HCT116 (cell line): ENCODE measurements at regions of chr21 and their contacts with region 1.

Region 1: DNA sequence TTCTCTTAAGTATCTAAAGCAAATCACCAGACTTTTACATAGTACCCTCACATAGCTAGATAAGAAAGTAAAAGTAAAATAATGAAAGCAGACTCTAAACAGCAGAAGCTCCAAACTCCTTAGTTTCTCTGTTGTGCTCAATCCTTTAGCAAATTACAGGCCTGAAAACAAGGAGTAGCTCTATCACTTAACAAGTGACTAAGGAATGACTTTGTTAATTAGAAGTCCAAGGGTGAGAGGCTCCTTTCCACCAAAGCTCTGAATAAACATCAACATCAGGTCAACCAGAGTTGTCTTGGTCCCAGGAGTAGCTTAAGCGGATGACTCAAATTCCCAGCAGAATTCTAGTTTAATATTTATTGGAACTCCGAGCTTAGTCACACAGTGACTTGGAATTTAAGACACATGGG is 5.9 kb downstream of the NRIP1 start:
- DNase-seq: peak; percentile 32
- ATAC-seq: peak; percentile 56
- H3K4me3 ChIP-seq: peak overlapping the region; percentile 6 to 14; a peak in 3 of 4 replicates
- H3K27ac ChIP-seq: peak overlapping the region; percentile 95
- H3K4me1 ChIP-seq: peaks cover 32 to 85% of the 10 kb centered on the region in 2 experiments
- H3K27me3 ChIP-seq: no peaks in the 10 kb centered on the region
- CTCF ChIP-seq: no peak
- POLR2A ChIP-seq: no peak
- RAD21 ChIP-seq: no peak

Region 2: GRCh38 chr21:14869984-14870874 is 188.6 kb before region 1 on chr21:
- CTCF ChIA-PET with region 1: no interaction called
- POLR2A ChIA-PET with region 1: no interaction called
- RAD21 ChIA-PET with region 1: no interaction called
- intact Hi-C with region 1: loop called (anchors 5 kb)
- DNase-seq: no peak
- ATAC-seq: no peak
- H3K4me3 ChIP-seq: peak overlapping the region in 1 of 2 experiments; percentile 18; a peak in 1 of 4 replicates
- H3K27ac ChIP-seq: peak overlapping the region; percentile 59
- H3K4me1 ChIP-seq: peaks cover 45 to 56% of the 10 kb centered on the region in 2 experiments
- H3K27me3 ChIP-seq: no peaks in the 10 kb centered on the region
- CTCF ChIP-seq: no peak
- POLR2A ChIP-seq: no peak
- RAD21 ChIP-seq: no peak